Activated CD4-positive, alpha-beta T cell treated with anti-CD3 and anti-CD28 coated beads, Interleukin-2, amount 10 ng/mL, durations not matched to agents 24 days and 14 days (primary cell): ENCODE measurements at regions of chr1 and their contacts with region 1.

Region 1: DNA sequence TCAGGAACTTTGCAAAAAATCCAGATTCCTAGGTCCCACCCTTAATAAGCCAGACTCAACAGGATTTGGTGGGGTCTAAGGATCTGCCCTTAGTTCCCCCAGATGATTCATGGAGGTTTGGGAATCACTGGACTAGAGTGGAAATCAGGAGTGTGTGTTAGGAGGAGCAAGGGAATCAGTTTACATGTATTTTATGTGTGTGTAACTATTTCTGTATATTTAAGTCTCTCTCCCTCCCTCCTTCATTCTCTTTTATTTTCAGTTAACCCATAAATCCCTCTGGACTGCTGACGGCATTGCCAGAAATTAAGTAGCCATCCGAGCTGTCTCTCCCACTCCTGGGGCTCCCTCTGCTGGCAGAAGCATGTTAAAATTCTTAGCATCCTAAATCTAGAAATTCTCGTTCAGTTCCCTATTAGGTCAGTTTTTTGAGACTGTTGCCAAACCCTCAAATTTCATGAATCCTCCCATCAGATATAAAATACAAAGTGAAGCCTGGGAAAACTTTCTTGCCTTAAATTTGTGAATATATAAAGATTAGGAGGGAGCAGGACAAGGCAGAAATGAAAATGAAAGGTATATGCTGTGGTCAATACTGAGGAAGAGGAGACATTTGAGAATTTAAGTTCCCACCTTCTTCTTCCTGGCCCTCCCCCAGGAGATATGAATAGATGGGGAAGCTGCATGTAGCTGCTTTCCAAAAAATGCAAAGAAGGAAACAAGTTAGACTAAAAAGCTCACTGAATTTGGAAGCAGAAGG is 11.7 kb upstream of the HSD11B1 start:
- DNase-seq: peak; percentile 92
- H3K4me3 Mint-ChIP-seq: peak overlapping the region; percentile 37
- H3K27ac Mint-ChIP-seq: peak overlapping the region; percentile 57
- H3K4me1 Mint-ChIP-seq: peaks cover 62% of the 10 kb centered on the region
- H3K27me3 Mint-ChIP-seq: no peaks in the 10 kb centered on the region

Region 2: GRCh38 chr1:208803011-208803811 is 889.7 kb before region 1 on chr1:
- intact Hi-C with region 1: no loop called
- DNase-seq: no peak
- H3K4me3 Mint-ChIP-seq: no peak overlapping the region
- H3K27ac Mint-ChIP-seq: no peak overlapping the region
- H3K4me1 Mint-ChIP-seq: no peaks in the 10 kb centered on the region
- H3K27me3 Mint-ChIP-seq: no peaks in the 10 kb centered on the region

Region 3: DNA sequence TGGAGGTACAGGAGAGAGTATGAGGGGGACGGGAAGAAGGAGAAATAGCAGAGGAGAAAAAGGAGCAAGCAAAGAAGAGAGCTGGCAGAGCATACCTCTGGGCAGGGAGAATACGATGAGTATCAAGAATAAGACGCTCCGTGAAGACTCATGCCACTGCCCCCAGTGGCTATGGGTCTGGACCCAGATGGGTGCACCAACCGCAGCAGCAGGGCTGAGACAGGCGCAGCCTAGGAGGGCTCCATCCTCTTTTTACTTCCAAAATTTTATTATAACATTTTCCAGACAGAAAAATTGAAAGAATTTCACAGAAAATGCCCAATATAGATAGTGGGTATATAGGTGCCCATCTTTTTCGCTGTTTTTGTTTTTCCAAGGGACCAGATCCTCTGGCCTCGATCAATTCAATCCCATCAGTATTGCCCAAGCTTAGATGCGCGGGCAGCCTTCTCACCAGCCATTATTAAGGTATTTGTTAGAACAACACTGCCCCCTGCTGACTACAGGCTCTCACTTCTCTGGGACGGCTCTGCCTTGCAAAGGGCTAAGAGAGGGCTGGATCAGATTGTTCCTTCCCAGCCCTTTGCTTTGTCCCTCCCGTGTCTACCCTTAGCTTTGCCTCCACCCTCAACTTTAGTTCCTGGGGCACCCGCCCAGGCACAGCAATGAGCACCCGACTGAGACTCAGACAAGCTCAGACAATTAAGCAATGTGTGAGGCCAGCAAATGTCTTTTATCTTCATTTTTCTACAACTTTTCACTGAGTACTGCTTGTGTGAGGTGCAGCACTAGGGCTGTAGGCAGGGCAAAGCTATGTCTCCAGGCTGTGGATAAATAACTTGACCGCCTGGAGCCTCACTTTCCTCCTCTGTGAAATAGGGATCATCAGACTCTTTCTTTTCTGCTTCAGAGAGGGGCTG is 126.9 kb before region 1 on chr1:
- intact Hi-C with region 1: loop called (anchors 1 kb)
- DNase-seq: peak; percentile 93
- H3K4me3 Mint-ChIP-seq: no peak overlapping the region
- H3K27ac Mint-ChIP-seq: no peak overlapping the region
- H3K4me1 Mint-ChIP-seq: peaks cover 23% of the 10 kb centered on the region
- H3K27me3 Mint-ChIP-seq: peaks cover 39% of the 10 kb centered on the region

Region 4: DNA sequence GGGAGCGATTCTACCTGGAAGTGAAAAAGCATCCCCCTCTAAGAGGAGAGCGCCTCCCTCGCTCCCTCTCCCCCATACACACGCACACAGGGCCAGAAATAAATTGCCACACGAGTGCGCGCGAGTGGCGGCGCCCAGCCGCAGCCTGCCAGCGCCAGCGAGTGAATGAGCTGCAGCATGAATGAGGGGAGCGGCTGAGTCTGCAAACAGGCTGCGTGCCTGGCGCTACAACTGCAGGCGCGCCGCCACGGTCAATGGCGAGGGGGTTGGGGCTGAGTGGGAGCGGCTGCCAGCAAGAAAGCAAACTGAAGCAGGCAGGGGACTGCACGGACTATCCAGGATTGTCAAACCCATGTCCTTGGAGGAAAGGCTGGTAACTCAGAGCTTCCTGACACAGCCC is 107.3 kb before region 1 on chr1:
- intact Hi-C with region 1: loop called (anchors 5 kb)
- DNase-seq: peak; percentile 71
- H3K4me3 Mint-ChIP-seq: no peak overlapping the region
- H3K27ac Mint-ChIP-seq: no peak overlapping the region
- H3K4me1 Mint-ChIP-seq: peaks cover 1% of the 10 kb centered on the region
- H3K27me3 Mint-ChIP-seq: peaks cover 20% of the 10 kb centered on the region

Region 5: GRCh38 chr1:209627732-209628196 is 65.2 kb before region 1 on chr1:
- intact Hi-C with region 1: loop called (anchors 1 kb)
- DNase-seq: peak; percentile 94
- H3K4me3 Mint-ChIP-seq: no peak overlapping the region
- H3K27ac Mint-ChIP-seq: peak overlapping the region; percentile 38
- H3K4me1 Mint-ChIP-seq: peaks cover 8% of the 10 kb centered on the region
- H3K27me3 Mint-ChIP-seq: no peaks in the 10 kb centered on the region

Region 6: GRCh38 chr1:209736490-209737117 is 43.7 kb after region 1 on chr1:
- intact Hi-C with region 1: loop called (anchors 2 kb)
- DNase-seq: no peak
- H3K4me3 Mint-ChIP-seq: peak overlapping the region; percentile 34
- H3K27ac Mint-ChIP-seq: peak overlapping the region; percentile 93
- H3K4me1 Mint-ChIP-seq: peaks cover 54% of the 10 kb centered on the region
- H3K27me3 Mint-ChIP-seq: no peaks in the 10 kb centered on the region